ENCODE measurements at regions of chr10 and their contacts with region 1.

Region 1: GRCh38 chr10:79463578-79464496 is 18.4 kb upstream of the ZCCHC24 start:
- DNase-seq: no peak
- H3K4me3 ChIP-seq: no peak overlapping the region
- H3K27ac ChIP-seq: no peak overlapping the region
- H3K4me1 ChIP-seq: peaks cover 0 to 11% (median 2%) of the 10 kb centered on the region in 4 experiments
- H3K27me3 ChIP-seq: peaks cover 0 to 6% (median 0%) of the 10 kb centered on the region in 5 experiments

Region 2: GRCh38 chr10:79400146-79401004 is 63.5 kb before region 1 on chr10:
- CTCF ChIA-PET with region 1: interaction called, 10 read pairs
- POLR2A ChIA-PET with region 1: no interaction called
- DNase-seq: peak; percentile 34 to 55 (median 54)
- H3K4me3 ChIP-seq: no peak overlapping the region
- H3K27ac ChIP-seq: no peak overlapping the region
- H3K4me1 ChIP-seq: peaks cover 2 to 43% (median 31%) of the 10 kb centered on the region in 4 experiments
- H3K27me3 ChIP-seq: peaks cover 0 to 22% (median 6%) of the 10 kb centered on the region in 5 experiments

Region 3: GRCh38 chr10:79429751-79430150 is 34.1 kb before region 1 on chr10:
- CTCF ChIA-PET with region 1: no interaction called
- POLR2A ChIA-PET with region 1: no interaction called
- DNase-seq: no peak
- H3K4me3 ChIP-seq: no peak overlapping the region
- H3K27ac ChIP-seq: no peak overlapping the region
- H3K4me1 ChIP-seq: peaks cover 0 to 3% (median 0%) of the 10 kb centered on the region in 4 experiments
- H3K27me3 ChIP-seq: no peaks in the 10 kb centered on the region

Region 4: DNA sequence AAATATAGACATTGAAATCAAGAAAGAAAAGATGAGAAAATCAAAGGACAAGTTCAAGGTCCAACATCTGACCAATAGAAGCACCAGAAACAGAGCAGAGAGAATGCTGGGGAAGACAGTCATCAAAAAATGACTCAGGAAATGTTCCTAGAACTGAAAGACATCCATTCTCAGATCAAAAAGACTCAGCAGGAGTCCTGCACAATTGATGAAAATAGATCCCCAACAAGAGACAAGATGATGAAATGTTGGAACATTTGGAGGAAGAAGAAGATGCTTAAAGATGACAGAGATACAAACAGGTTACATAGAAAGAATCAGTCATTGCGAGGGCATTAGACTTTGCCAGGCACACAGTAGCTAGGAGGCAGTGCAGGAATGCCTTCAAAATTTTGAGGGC is 18.5 kb after region 1 on chr10:
- CTCF ChIA-PET with region 1: interaction called, 21 read pairs
- POLR2A ChIA-PET with region 1: no interaction called
- DNase-seq: no peak
- H3K4me3 ChIP-seq: no peak overlapping the region
- H3K27ac ChIP-seq: no peak overlapping the region
- H3K4me1 ChIP-seq: no peaks in the 10 kb centered on the region
- H3K27me3 ChIP-seq: peaks cover 0 to 2% (median 0%) of the 10 kb centered on the region in 5 experiments

Region 5: DNA sequence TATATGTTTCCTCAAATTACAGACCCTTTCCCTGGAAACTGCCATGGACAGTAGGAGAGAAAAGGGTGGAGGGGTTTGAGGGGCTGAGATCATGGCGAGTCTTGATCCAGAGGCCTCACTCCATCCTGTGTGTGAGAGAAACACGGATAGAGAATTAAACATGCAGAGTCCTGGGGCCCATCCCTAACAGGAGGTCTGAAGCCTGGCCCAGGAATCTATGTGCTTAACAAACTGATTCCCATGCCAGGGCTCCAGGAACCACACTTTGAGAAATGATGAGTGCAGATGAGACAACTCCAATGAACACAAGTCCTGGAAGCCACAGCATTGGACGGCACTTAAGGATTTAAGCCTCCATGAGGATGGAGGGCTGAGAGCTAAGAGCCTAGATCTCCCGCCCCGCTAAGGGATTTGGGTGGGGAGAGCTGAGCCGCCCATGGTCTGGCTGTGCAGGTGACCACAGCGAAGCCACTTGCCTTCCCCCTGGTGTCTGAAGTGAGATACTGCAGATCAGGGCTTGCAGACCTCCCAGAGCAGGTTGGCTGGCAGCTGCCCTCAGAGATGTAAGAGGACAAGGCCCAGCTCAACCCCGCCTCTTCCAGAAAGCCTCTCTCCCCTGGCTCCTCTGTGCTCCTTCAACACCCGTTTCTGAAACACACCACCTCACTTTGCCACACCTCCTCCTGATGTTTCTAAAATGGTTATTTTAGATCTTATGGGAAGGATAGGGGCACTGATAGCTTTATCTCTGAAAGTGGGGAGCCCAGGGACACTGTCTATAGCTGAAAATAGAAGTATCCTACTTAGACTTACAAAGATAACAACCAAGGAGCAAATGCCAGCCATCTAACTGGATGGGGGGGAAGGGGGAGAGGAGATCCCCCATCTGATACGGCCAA is 23.7 kb after region 1 on chr10:
- CTCF ChIA-PET with region 1: interaction called, 21 read pairs
- POLR2A ChIA-PET with region 1: no interaction called
- DNase-seq: peak; percentile 45 to 63 (median 55)
- H3K4me3 ChIP-seq: no peak overlapping the region
- H3K27ac ChIP-seq: no peak overlapping the region
- H3K4me1 ChIP-seq: peaks cover 0 to 2% (median 0%) of the 10 kb centered on the region in 4 experiments
- H3K27me3 ChIP-seq: peaks cover 0 to 2% (median 0%) of the 10 kb centered on the region in 5 experiments

Measured in common myeloid progenitor, CD34-positive (primary cell).